Naive thymus-derived CD4-positive, alpha-beta T cell (primary cell): ENCODE measurements at regions of chr3 and their contacts with region 1.

Region 1: DNA sequence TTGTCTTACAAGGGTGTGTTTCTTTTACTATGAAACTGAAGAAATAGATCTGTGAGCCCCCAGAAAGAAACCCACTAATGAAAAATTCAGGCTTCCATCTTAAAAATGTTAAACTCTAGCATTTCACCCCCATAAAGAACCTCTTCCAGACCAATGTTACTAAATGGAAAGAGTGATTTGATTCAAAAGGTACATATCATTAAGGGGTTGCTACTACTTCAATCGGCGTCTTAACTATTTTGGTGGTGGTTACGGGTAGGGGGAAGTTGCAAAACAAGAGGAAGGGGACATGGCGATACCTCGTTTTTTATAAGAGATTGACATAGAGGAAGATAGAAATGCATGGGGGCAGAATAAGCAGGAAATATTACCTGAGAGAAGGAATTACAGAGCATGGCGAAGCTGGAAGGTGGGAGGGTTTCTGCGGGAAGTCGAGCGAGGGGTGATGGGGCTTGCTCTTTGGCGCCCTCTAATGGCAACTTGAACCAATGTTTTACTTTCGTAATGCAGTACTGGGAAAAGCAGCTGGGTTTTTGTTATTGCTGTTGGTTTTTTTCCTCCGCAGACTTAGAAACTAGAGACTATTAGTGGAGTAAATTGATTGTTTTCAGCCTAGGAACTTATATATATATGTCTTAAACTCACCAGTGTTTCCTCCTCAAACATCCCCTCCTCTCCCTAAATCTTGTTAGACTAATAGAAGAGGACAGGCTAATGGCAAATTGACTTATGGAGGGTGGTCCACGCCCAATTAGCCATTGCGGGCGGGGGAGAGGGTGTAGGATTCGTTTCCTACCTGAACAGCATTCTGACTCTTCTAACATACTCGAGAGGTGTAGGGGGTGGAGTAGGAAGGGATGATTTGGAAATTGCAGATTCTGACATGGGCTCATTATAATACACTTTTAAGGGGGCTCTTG is 11.3 kb upstream of the SOX2 start:
- DNase-seq: peak in 4 of 9 donors; percentile 29 to 56 (median 37)
- ATAC-seq: peak; percentile 70
- H3K4me3 ChIP-seq: peak overlapping the region; percentile 8
- H3K4me3 Mint-ChIP-seq: peak overlapping the region; percentile 20 to 81 (median 63)
- H3K27ac ChIP-seq: no peak overlapping the region
- H3K27ac Mint-ChIP-seq: peak overlapping the region in 1 of 9 donors; percentile 62
- H3K4me1 ChIP-seq: peaks cover 7 to 9% of the 10 kb centered on the region in 2 donors
- H3K4me1 Mint-ChIP-seq: peaks cover 6 to 40% (median 26%) of the 10 kb centered on the region in 7 donors
- H3K27me3 ChIP-seq: peaks cover 6 to 24% of the 10 kb centered on the region in 2 donors
- H3K27me3 Mint-ChIP-seq: peaks cover 86 to 94% (median 91%) of the 10 kb centered on the region in 5 donors

Region 2: DNA sequence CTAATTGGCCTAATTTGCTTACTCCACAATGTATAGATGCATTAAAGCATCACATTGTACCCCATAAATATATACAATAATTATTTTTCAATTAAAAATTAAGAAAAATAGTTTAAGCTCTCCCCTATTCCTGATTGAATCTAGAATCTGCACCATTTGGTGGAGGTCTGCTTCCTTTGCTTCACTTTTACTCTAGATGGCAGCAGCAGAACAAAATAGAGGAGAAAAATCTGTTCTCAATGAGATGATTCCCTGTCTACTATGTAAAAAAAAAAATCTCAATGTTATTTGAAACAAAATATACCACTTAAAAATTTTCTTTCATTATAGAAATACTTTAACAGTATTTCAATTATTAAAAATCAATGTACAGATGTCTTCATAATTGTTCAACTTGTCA is 897.6 kb before region 1 on chr3:
- CTCF ChIA-PET with region 1: no interaction called
- POLR2A ChIA-PET with region 1: no interaction called
- intact Hi-C with region 1: loop called in 1 of 2 experiments (anchors 2 kb)
- DNase-seq: no peak
- ATAC-seq: no peak
- H3K4me3 ChIP-seq: no peak overlapping the region
- H3K4me3 Mint-ChIP-seq: no peak overlapping the region
- H3K27ac ChIP-seq: no peak overlapping the region
- H3K27ac Mint-ChIP-seq: no peak overlapping the region
- H3K4me1 ChIP-seq: no peaks in the 10 kb centered on the region
- H3K4me1 Mint-ChIP-seq: no peaks in the 10 kb centered on the region
- H3K27me3 ChIP-seq: no peaks in the 10 kb centered on the region
- H3K27me3 Mint-ChIP-seq: peaks cover 0 to 21% (median 15%) of the 10 kb centered on the region in 5 donors

Region 3: DNA sequence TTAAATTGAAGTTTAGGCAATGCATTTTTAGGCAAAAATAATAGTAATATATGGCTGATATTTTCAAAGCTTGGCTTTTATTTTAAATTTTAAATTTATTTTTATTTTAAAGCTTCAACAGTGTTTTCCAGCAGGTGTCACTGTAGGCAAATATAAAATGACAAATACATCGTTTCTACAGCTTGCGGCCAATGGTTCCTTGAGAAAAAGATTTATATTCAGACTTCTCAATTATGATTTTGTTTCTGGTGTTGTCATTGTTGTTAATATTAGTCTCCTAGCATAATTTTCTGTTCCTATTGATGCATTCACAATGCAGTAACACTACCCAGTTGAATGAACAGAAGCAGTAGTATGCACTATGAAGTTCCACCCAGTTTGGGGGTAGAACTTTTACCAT is 490.2 kb before region 1 on chr3:
- CTCF ChIA-PET with region 1: no interaction called
- POLR2A ChIA-PET with region 1: no interaction called
- intact Hi-C with region 1: loop called in 1 of 2 experiments (anchors 5 kb)
- DNase-seq: no peak
- ATAC-seq: no peak
- H3K4me3 ChIP-seq: no peak overlapping the region
- H3K4me3 Mint-ChIP-seq: no peak overlapping the region
- H3K27ac ChIP-seq: no peak overlapping the region
- H3K27ac Mint-ChIP-seq: no peak overlapping the region
- H3K4me1 ChIP-seq: no peaks in the 10 kb centered on the region
- H3K4me1 Mint-ChIP-seq: no peaks in the 10 kb centered on the region
- H3K27me3 ChIP-seq: no peaks in the 10 kb centered on the region
- H3K27me3 Mint-ChIP-seq: peaks cover 0 to 22% (median 5%) of the 10 kb centered on the region in 5 donors

Region 4: DNA sequence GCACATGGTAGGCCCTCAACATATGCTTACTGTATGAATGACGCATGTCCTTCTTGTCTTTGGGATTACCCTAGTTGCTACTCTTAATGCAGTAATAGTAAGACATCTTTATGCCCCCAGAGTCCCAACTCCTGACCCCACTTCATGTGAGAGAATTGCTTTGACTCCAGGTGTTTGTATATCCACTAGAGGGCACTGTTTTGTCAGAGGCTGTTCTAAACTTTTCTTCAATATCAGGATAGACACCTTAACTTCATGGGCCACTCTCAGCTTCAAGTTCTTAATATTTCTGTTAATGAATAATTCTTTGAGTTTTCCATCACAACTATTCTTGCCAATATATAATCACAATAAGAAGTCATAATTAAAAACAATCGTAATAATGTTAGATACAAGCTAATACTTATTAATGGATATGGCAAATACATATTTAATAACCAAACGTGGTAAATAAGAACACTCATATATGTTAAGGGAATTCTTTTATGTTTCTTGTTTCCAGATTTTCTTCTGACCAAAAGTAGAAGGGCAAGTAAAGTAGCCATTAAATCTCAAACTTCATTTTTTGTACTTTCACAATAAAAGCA is 373.7 kb before region 1 on chr3:
- CTCF ChIA-PET with region 1: no interaction called
- POLR2A ChIA-PET with region 1: no interaction called
- intact Hi-C with region 1: loop called in 1 of 2 experiments (anchors 1 kb)
- DNase-seq: peak in 2 of 9 donors; percentile 11 to 22
- ATAC-seq: no peak
- H3K4me3 ChIP-seq: no peak overlapping the region
- H3K4me3 Mint-ChIP-seq: no peak overlapping the region
- H3K27ac ChIP-seq: no peak overlapping the region
- H3K27ac Mint-ChIP-seq: no peak overlapping the region
- H3K4me1 ChIP-seq: no peaks in the 10 kb centered on the region
- H3K4me1 Mint-ChIP-seq: no peaks in the 10 kb centered on the region
- H3K27me3 ChIP-seq: no peaks in the 10 kb centered on the region
- H3K27me3 Mint-ChIP-seq: peaks cover 0 to 10% (median 4%) of the 10 kb centered on the region in 5 donors

Region 5: GRCh38 chr3:181344331-181344730 is 356.1 kb before region 1 on chr3:
- CTCF ChIA-PET with region 1: no interaction called
- POLR2A ChIA-PET with region 1: no interaction called
- intact Hi-C with region 1: no loop called
- DNase-seq: no peak
- ATAC-seq: no peak
- H3K4me3 ChIP-seq: no peak overlapping the region
- H3K4me3 Mint-ChIP-seq: no peak overlapping the region
- H3K27ac ChIP-seq: no peak overlapping the region
- H3K27ac Mint-ChIP-seq: no peak overlapping the region
- H3K4me1 ChIP-seq: no peaks in the 10 kb centered on the region
- H3K4me1 Mint-ChIP-seq: no peaks in the 10 kb centered on the region
- H3K27me3 ChIP-seq: no peaks in the 10 kb centered on the region
- H3K27me3 Mint-ChIP-seq: peaks cover 0 to 3% (median 0%) of the 10 kb centered on the region in 5 donors

Region 6: DNA sequence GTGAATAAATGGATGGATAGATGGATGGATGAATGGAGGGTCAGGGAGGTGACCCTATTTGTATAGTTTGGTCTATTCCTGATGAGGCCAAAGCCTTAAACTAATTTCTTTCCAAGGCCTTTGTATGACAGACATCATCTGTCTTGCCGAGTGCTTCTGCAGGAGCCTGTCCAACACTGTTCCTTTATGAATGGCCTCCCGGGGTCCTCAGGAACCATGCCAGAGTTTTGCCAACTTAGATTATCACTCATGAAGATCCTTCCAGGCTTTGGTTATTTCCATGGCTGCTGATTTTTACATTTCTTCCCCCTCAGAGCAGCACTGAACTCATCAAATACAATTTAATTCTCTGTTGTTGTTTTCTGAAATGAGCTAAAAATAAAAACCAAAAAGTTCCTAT is 121.7 kb before region 1 on chr3:
- CTCF ChIA-PET with region 1: no interaction called
- POLR2A ChIA-PET with region 1: no interaction called
- intact Hi-C with region 1: no loop called
- DNase-seq: no peak
- ATAC-seq: no peak
- H3K4me3 ChIP-seq: no peak overlapping the region
- H3K4me3 Mint-ChIP-seq: no peak overlapping the region
- H3K27ac ChIP-seq: no peak overlapping the region
- H3K27ac Mint-ChIP-seq: no peak overlapping the region
- H3K4me1 ChIP-seq: no peaks in the 10 kb centered on the region
- H3K4me1 Mint-ChIP-seq: no peaks in the 10 kb centered on the region
- H3K27me3 ChIP-seq: no peaks in the 10 kb centered on the region
- H3K27me3 Mint-ChIP-seq: no peaks in the 10 kb centered on the region

Region 7: DNA sequence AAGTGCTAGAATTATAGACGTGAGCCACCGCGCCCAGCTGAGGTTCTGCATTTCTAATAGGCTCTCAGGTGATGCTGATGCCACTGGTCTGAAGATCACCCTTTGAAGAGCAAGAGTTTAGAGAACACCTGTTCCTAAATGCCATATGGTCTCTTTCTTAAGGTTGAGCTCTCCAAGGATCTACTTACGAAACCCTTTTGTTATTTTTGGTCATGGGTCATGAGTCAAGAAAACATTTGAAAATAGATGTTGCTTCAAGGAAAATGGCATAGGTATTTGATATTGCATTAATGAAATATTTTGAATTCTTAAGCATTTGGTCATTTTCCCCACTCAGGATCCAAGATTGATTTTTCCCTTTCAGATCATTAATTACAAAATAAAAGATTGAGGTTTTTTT is 63.4 kb before region 1 on chr3:
- CTCF ChIA-PET with region 1: no interaction called
- POLR2A ChIA-PET with region 1: no interaction called
- intact Hi-C with region 1: no loop called
- DNase-seq: no peak
- ATAC-seq: no peak
- H3K4me3 ChIP-seq: no peak overlapping the region
- H3K4me3 Mint-ChIP-seq: no peak overlapping the region
- H3K27ac ChIP-seq: no peak overlapping the region
- H3K27ac Mint-ChIP-seq: no peak overlapping the region
- H3K4me1 ChIP-seq: no peaks in the 10 kb centered on the region
- H3K4me1 Mint-ChIP-seq: no peaks in the 10 kb centered on the region
- H3K27me3 ChIP-seq: no peaks in the 10 kb centered on the region
- H3K27me3 Mint-ChIP-seq: peaks cover 0 to 4% (median 0%) of the 10 kb centered on the region in 5 donors

Region 8: DNA sequence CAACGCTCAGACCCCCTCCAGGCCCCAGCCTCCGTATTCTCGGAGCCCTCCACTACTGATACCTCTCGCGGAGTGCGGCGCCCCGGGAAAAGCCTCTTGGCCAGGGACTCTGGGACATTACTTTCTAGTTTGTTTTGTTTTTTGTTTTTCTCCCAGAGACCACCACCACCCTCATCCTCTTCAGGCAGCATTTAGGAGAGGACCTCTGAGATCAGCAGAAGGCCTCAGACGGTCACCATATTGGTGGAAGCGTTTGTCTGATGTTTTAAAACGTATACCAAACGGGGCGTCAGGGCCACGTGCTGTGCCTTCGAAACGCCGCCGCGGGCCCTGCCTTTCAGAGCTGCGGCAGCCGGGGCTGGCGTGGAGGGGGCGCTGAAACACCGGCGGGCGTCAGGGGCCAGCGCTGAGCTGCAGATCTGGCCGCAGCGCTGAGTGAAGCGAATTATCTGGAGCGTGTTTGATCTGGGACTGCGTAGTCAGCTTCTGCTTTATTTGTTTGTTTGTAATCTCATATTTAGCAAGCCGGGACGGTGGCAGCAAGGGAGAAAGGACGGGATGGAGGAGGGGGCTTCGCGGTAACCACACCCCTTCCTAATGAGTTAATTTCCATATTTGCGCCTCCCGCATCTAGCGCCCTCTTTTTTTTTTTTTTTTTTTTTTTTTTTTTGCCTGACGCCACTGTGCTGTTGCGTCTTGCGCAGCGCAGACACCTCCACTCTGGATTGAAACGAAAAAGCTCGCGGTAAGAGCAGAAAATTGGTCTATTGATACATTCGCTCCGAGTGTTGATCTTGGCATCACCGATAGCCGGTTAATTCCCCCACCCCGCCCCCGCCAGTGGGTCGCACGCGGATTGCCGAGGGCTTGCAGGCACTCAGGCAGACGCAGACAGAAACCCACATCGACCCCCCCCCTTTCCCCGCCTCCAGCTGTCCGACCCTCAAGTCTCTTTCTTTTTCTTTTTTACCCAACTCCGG is 26.2 kb after region 1 on chr3:
- CTCF ChIA-PET with region 1: no interaction called
- POLR2A ChIA-PET with region 1: no interaction called
- intact Hi-C with region 1: loop called in 1 of 2 experiments (anchors 1 kb)
- DNase-seq: no peak
- ATAC-seq: no peak
- H3K4me3 ChIP-seq: peak overlapping the region; percentile 45
- H3K4me3 Mint-ChIP-seq: peak overlapping the region; percentile 62 to 84 (median 80)
- H3K27ac ChIP-seq: no peak overlapping the region
- H3K27ac Mint-ChIP-seq: peak overlapping the region in 4 of 9 donors; percentile 20 to 73 (median 60)
- H3K4me1 ChIP-seq: peaks cover 0 to 3% of the 10 kb centered on the region in 2 donors
- H3K4me1 Mint-ChIP-seq: peaks cover 0 to 21% (median 17%) of the 10 kb centered on the region in 7 donors
- H3K27me3 ChIP-seq: peaks cover 16 to 38% of the 10 kb centered on the region in 2 donors
- H3K27me3 Mint-ChIP-seq: peaks cover 90 to 98% (median 94%) of the 10 kb centered on the region in 5 donors

Region 9: GRCh38 chr3:181782301-181782954 is 82.0 kb after region 1 on chr3:
- CTCF ChIA-PET with region 1: no interaction called
- POLR2A ChIA-PET with region 1: no interaction called
- intact Hi-C with region 1: no loop called
- DNase-seq: no peak
- ATAC-seq: no peak
- H3K4me3 ChIP-seq: no peak overlapping the region
- H3K4me3 Mint-ChIP-seq: no peak overlapping the region
- H3K27ac ChIP-seq: no peak overlapping the region
- H3K27ac Mint-ChIP-seq: no peak overlapping the region
- H3K4me1 ChIP-seq: no peaks in the 10 kb centered on the region
- H3K4me1 Mint-ChIP-seq: no peaks in the 10 kb centered on the region
- H3K27me3 ChIP-seq: no peaks in the 10 kb centered on the region
- H3K27me3 Mint-ChIP-seq: no peaks in the 10 kb centered on the region